Activated T-helper 2 cell treated with anti-CD3 and anti-CD28 coated beads, Interferon-gamma antibody, Interleukin-2, Interleukin-4, amounts not matched to agents 10 μg/mL and 5 μg/mL and 100 μg/mL, durations not matched to agents 14 hours and 24 hours and 36 hours (primary cell): ENCODE measurements at regions of chr17 and their contacts with region 1.

Region 1: GRCh38 chr17:996554-997344 is at the start of gene TIMM22:
- DNase-seq: peak; percentile 91
- H3K4me3 Mint-ChIP-seq: peak within 1 kb of the TSS; percentile 95
- H3K27ac Mint-ChIP-seq: peak within 1 kb of the TSS; percentile 95
- H3K4me1 Mint-ChIP-seq: peaks cover 11% of the 10 kb centered on the region
- H3K27me3 Mint-ChIP-seq: no peaks in the 10 kb centered on the region
- total RNA-seq, gene TIMM22: 13.6 and 15.0 TPM in 2 replicates

Region 2: DNA sequence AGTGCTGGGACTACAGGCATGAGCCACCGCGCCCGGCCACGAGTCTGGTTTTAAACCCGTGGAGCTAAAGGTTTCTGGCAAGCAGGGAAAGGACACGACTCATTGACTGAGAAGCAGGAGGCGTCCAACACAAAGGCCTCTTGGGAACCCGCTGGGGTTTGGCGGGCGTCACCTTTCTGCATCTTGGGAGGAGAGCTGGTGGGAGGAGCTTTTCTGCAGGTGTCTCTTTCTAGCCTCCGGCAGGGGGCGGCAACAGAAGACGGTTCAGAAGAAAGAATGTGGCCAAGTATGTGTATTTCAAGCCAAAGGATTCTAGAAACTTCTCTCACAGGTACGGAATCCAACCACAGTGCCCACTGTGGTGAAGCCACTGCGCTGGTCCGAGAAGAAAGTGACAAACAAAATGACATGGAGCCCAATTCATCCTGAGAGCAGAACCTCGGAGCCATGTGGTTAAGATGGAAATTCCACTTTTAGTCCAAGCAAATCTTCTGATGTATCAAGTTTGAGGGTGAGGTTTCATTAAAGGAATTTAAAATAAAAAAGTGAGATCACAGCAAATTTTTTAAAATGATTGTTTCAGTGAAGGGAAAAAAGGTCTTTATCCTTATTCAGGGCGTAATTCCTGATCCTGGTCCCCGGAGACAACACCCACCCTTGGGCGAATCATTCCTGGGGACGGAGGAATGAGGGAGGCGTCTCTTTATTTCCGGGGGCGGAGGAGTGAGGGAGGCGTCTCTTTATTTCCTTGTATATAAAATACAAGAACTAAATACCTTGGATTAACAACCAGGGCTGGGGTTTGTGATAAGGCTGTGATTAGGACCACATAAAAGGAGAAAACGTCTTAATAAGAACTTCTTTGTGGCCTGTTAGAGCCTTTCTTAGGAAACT is 117.0 kb before region 1 on chr17:
- intact Hi-C with region 1: loop called (anchors 5 kb)
- DNase-seq: peak; percentile 48
- H3K4me3 Mint-ChIP-seq: no peak overlapping the region
- H3K27ac Mint-ChIP-seq: no peak overlapping the region
- H3K4me1 Mint-ChIP-seq: peaks cover 12% of the 10 kb centered on the region
- H3K27me3 Mint-ChIP-seq: peaks cover 17% of the 10 kb centered on the region

Region 3: DNA sequence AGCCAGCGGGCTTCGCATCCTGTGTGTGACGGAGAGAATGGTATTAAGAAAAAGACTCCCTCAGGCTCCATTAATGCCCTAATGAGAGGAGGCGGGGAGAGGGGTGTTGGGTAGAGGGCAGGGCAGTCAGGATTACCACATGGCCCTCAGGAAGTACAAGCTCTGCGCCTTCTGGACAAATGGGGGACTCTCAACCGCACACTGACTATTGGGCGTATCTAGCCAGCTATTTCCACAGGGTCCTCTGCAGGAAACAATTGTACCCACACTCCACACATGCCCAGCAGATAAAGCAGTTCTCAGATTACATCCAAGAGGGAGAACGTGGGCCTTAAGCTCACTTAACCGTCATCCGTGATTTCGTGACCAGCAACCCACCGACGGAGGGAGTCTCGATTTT is 31.9 kb before region 1 on chr17:
- intact Hi-C with region 1: no loop called
- DNase-seq: no peak
- H3K4me3 Mint-ChIP-seq: no peak overlapping the region
- H3K27ac Mint-ChIP-seq: no peak overlapping the region
- H3K4me1 Mint-ChIP-seq: no peaks in the 10 kb centered on the region
- H3K27me3 Mint-ChIP-seq: peaks cover 15% of the 10 kb centered on the region